HEK293 (cell line): ENCODE measurements at regions of chr4 and their contacts with region 1.

Region 1: DNA sequence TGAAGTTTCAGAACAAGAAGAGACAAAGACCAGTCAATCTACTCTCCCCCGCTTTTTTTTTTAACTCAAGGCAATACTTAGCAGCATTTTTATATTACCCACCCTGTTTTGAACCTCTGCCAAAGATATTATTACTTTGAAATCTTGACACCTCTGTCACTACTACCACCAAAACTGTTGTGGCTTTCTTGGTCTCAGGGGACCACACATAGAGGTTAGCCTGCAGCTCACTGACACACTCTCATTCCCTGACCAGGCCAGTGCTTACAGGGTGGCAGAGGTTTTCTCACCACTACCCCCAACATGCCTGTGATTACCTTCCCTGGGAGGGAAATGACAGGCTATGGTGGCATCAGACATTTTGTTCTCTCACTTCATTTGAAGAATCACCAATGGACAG is 137.4 kb upstream of the STIM2 start:
- H3K4me3 ChIP-seq: no peak overlapping the region
- H3K27ac ChIP-seq: no peak overlapping the region
- H3K4me1 ChIP-seq: no peaks in the 10 kb centered on the region
- CTCF ChIP-seq: no peak

Region 2: DNA sequence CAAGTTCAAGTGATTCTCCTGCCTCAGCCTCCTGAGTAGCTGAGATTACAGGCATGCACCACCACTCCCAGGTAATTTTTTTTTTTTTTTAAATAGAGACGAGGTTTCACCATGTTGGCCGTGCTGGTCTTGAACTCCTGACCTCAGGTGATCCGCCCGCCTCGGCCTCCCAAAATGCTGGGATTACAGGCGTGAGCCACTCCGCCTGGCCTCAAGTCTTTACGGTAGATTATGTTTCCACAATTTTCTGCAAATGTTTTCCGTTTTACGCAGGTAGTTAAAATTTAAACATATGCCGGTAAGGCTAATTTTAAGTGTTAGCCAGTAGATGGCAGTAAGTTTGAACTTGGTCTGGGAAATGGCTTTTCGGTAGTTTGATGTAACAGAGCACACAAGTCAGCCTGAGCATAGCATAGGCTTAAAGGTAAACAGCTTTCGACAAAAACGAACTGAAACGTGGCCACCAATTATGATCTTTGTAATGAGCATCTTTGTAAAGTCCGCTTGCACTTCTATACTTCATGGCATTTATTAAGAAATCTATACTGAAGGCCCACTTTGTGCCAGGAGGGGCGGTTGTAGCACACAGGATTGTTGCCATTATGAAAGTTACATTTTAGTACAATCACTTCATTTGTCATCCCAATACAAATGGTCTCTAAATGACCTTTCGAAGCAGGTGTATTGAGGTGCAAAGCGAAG is 264.0 kb before region 1 on chr4:
- CTCF ChIA-PET with region 1: interaction called, 15 read pairs
- POLR2A ChIA-PET with region 1: no interaction called
- H3K4me3 ChIP-seq: no peak overlapping the region
- H3K27ac ChIP-seq: no peak overlapping the region
- H3K4me1 ChIP-seq: no peaks in the 10 kb centered on the region
- CTCF ChIP-seq: peak; percentile 61